Left colon (tissue), 2 donors: ENCODE measurements at regions of chr9 and their contacts with region 1.

Region 1: GRCh38 chr9:19925817-19926503 is 137.1 kb upstream of the SLC24A2 start:
- DNase-seq: peak; percentile 47 to 63
- ATAC-seq: peak; percentile 98

Region 2: DNA sequence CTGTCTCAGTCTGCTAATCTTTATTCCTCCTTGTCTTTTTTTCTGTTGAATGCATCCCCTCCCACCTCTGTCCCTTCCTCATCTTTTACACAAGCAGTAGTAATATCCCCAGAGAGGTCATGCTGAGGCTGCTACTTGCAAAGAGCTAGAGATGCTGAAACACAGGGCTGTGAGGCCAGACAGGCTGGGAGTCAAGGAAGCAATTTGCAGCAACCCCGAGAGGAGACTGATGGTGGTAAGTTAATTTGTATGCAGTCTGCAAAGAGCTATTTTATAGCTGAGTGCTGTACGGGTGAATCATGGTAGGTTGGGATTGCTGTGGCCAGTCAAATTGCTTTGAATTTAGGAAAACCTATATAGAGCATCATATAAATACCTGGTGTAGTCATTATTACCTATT is 46.9 kb before region 1 on chr9:
- intact Hi-C with region 1: no loop called
- DNase-seq: no peak
- ATAC-seq: no peak

Region 3: GRCh38 chr9:20356403-20357035 is 430.6 kb after region 1 on chr9:
- intact Hi-C with region 1: loop called in 1 of 2 experiments (anchors 10 kb)
- DNase-seq: peak; percentile 66 to 74
- ATAC-seq: peak; percentile 92

Region 4: GRCh38 chr9:20636888-20637440 is 711.0 kb after region 1 on chr9:
- intact Hi-C with region 1: loop called in 1 of 2 experiments (anchors 10 kb)
- DNase-seq: no peak
- ATAC-seq: no peak

Region 5: DNA sequence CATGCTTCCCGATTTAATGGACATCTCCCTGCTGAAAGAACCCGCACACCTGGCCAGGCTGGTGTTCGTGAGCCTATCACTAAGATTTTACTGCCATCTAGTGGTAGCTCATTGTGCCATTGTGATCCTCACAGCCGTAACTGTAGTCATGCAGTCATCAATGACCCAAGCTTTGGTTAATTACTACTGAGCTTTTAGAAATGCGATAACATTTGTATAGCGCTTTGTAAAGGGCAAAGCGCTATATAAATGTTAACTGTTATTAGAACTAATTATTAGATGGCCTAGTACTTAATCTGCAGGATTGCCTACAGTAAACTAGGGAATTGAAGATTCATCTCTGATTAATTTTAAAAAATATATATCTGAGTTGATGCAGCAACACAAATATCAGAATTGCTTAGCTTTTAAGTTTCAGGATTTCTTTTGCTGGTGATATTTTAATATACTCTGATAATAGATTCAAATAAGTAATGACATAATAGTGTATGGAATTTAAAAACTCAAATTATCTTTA is 1015.3 kb after region 1 on chr9:
- intact Hi-C with region 1: loop called in 1 of 2 experiments (anchors 10 kb)
- DNase-seq: peak; percentile 31 to 44
- ATAC-seq: peak; percentile 99

Region 6: DNA sequence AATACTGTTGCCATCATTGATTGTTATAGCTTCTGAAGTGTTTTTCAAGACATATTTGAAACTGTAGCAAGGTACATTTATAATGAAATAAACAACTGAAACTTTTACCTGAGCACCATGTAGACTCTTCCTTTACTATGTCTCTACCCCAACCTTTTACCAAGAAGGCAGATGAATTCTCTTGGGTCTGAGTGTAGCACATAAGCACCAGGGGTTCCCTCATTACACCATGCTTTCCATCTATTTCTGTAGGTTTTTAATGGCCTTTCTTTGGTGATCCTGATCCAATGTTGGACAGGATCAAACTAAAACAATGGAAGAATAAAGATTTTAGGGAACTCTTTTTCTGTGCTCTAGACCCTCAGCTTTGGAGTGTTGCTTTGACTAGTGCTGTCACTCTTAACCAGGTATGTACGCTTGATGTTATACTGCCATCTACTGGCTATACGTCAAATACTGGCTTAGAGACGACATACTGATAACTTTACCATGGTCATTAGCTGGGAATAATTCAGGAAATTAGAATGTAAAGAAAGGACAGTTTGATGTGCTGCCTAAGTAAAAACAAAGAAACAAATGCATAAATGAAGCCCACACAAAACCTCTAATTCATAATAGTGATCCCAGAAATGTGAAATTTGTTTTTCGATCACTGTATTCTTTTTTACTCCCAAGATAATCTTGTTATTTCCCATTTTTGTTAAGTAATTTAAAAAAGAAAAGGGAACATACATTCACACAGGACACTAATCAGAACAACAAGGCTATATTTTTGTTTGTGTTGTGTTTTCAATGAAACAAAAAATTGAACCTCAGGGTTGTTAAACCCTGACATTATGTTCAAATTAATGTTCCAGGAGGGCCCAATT is 1185.0 kb after region 1 on chr9:
- intact Hi-C with region 1: loop called in 1 of 2 experiments (anchors 10 kb)
- DNase-seq: no peak
- ATAC-seq: peak; percentile 77